ENCODE measurements at regions of chr2 and their contacts with region 1.

Region 1: GRCh38 chr2:38907743-38908562 is 18.3 kb downstream of the ARHGEF33 start:
- DNase-seq: peak; percentile 51
- ATAC-seq: peak; percentile 92
- H3K4me3 ChIP-seq: 0 out of 2 replicates have a peak overlapping the region, but pooled peaks have one; percentile 45
- H3K27ac ChIP-seq: peak overlapping the region; percentile 52; the same call in 1 of the 2 replicates
- H3K4me1 ChIP-seq: peaks cover 24% of the 10 kb centered on the region
- H3K27me3 ChIP-seq: no peaks in the 10 kb centered on the region
- CTCF ChIP-seq: no peak
- EP300 ChIP-seq: peak; percentile 33 to 41; a peak in 1 of 4 replicates
- POLR2A ChIP-seq: no peak
- RAD21 ChIP-seq: no peak

Region 2: DNA sequence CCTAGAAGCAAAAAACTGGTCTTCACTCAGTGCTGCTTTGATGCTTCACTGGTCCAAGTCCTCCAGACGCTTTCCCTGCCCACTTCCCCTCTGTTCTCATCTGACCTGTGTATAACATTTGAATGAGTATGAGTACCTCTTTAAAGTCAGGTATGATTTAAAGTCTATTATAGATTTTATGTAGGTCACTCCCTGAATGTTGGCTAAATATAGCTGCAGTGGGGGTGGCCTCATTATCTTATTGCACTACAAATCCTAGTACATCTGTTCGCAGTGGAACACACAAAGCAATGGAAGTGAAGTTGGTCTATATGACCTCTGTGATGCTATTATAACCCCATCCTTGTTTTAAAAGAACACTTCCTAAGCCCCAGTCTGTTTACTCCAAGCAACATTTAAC is 14.9 kb after region 1 on chr2:
- CTCF ChIA-PET with region 1: no interaction called
- POLR2A ChIA-PET with region 1: interaction called, 10 read pairs
- RAD21 ChIA-PET with region 1: no interaction called
- SMC1A ChIA-PET with region 1: no interaction called
- in situ Hi-C with region 1: no loop called
- intact Hi-C with region 1: no loop called
- DNase-seq: no peak
- ATAC-seq: no peak
- H3K4me3 ChIP-seq: no peak overlapping the region
- H3K27ac ChIP-seq: no peak overlapping the region
- H3K4me1 ChIP-seq: no peaks in the 10 kb centered on the region
- H3K27me3 ChIP-seq: peaks cover 0 to 2% of the 10 kb centered on the region in 2 experiments; a peak in 2 of 4 replicates
- CTCF ChIP-seq: no peak
- EP300 ChIP-seq: no peak
- POLR2A ChIP-seq: no peak
- RAD21 ChIP-seq: no peak